Panc1 (cell line): ENCODE measurements at regions of chr9 and their contacts with region 1.

Region 1: DNA sequence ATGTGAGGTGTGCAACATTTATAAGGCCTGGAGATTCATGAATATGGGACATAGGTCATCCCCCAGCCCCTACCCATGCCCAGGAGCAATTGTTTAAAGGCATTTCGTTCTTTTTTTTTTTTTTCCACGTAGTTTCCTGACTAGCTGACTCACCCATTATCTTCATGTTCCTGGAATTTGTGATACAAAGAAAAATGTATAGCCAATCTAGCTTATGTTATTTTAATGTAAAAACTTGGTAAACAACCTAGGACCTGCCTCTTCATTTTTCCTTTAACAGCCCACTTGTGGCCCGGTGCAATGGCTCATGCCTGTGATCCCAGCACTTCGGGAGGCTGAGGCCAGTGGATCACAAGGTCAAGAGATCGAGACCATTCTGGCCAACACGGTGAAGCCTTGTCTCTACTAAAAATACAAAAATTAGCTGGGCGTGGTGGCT is 81.4 kb downstream of the OSTF1 start:
- DNase-seq: no peak
- ATAC-seq: no peak
- H3K4me3 ChIP-seq: no peak overlapping the region
- H3K27ac ChIP-seq: no peak overlapping the region
- H3K4me1 ChIP-seq: no peaks in the 10 kb centered on the region
- H3K27me3 ChIP-seq: no peaks in the 10 kb centered on the region
- CTCF ChIP-seq: no peak

Region 2: GRCh38 chr9:75061169-75061568 is 108.5 kb before region 1 on chr9:
- CTCF ChIA-PET with region 1: interaction called, 10 read pairs
- POLR2A ChIA-PET with region 1: no interaction called
- in situ Hi-C with region 1: no loop called
- intact Hi-C with region 1: no loop called
- DNase-seq: no peak
- ATAC-seq: no peak
- H3K4me3 ChIP-seq: no peak overlapping the region
- H3K27ac ChIP-seq: no peak overlapping the region
- H3K4me1 ChIP-seq: no peaks in the 10 kb centered on the region
- H3K27me3 ChIP-seq: no peaks in the 10 kb centered on the region
- CTCF ChIP-seq: no peak

Region 3: DNA sequence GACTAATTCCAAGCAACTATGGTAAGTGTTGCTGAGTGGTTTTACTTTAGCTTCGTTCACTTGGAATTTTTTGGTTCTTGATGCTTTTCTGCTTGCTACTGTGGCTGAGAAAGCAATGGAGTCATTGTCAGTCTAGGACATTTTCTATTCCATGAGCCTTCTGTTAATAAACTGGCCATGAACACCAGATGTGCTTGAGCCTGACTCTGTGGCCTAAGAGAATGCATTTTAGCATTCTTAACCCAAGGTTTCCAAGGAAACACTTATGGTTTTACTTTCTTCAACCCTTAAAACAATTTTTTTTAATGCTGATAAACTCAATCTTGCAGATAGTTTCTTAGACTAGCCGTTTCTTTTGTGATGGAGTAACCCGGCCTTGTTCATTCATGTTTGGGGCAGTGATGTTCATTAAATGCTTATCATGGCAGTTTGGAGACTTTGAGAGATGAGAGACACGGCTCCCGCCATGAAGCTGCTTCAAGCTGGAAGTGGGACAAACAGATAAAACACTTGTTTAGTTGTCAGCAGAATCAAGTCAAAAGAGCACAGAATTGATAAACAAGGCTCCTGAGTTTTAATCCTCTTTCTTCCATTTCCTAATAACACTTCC is 39.0 kb before region 1 on chr9:
- CTCF ChIA-PET with region 1: no interaction called
- POLR2A ChIA-PET with region 1: no interaction called
- in situ Hi-C with region 1: no loop called
- intact Hi-C with region 1: no loop called
- DNase-seq: no peak
- ATAC-seq: no peak
- H3K4me3 ChIP-seq: no peak overlapping the region
- H3K27ac ChIP-seq: no peak overlapping the region
- H3K4me1 ChIP-seq: no peaks in the 10 kb centered on the region
- H3K27me3 ChIP-seq: no peaks in the 10 kb centered on the region
- CTCF ChIP-seq: no peak

Region 4: DNA sequence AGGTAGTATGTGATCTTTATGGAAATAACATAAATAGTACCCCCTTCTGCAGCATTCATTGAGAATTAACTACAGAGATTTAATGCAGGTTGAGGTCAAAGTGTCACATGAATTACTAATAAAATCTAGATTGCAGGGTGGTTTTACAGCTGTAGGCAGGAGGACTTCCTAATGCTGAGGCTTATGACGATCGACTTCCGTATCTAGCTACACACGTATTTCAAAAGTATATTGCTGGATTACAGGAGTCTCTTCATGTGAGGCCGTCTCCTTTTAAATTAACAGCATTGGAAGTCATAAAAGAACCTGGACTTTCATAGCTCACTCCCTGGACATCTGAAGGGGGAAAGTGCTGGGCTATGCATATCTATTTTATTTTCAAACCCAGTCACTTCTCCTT is 99.5 kb after region 1 on chr9:
- CTCF ChIA-PET with region 1: no interaction called
- POLR2A ChIA-PET with region 1: no interaction called
- in situ Hi-C with region 1: no loop called
- intact Hi-C with region 1: no loop called
- DNase-seq: no peak
- ATAC-seq: no peak
- H3K4me3 ChIP-seq: no peak overlapping the region
- H3K27ac ChIP-seq: no peak overlapping the region
- H3K4me1 ChIP-seq: no peaks in the 10 kb centered on the region
- H3K27me3 ChIP-seq: no peaks in the 10 kb centered on the region
- CTCF ChIP-seq: no peak